ENCODE measurements at regions of chr3 and their contacts with region 1.

Region 1: DNA sequence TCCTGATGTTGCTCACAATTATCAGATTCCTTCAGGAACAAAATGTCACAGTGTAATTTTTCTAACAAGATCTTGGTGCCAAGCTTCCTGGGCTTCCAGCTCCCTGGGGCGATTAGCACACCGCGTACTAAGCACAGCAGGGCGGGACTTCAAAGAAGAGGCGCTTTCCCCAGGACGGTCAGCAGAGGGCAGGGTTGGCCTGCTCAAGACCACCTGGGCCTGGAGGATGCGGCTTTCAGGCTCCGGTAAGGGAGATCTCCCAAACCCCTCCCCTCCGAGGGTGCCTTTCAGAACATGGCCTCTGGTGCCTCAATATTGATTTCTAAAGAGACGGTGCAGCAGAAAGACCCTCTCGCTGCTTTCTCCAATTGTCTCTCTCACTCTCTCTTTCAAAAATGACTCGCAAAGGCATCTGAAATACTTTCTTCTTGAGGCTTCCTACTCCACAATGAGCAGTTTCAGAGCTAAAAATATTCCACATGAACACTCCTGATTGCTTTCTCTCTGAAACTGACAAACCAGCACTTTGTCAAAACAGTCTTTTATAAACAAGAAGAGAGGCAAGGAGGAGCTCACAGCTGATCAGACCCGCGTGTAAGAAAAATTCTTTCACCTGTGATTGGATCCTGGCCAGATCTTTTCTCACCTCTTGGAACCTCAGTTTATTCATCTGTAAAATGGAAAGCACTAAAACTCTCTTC is 154.0 kb downstream of the ADAMTS9 start:
- DNase-seq: peak; percentile 85 to 97 (median 90)
- H3K4me3 ChIP-seq: no peak overlapping the region
- H3K27ac ChIP-seq: peak overlapping the region in 2 of 5 donors; percentile 2 to 3
- H3K4me1 ChIP-seq: peaks cover 0 to 20% of the 10 kb centered on the region in 2 donors
- H3K27me3 ChIP-seq: no peaks in the 10 kb centered on the region
- CTCF ChIP-seq: peak; percentile 48 to 93 (median 84)
- POLR2A ChIP-seq: no peak

Region 2: GRCh38 chr3:64685800-64686445 is 152.2 kb after region 1 on chr3:
- intact Hi-C with region 1: loop called in 1 of 2 experiments (anchors 10 kb)
- DNase-seq: peak; percentile 93 to 97 (median 94)
- H3K4me3 ChIP-seq: peak overlapping the region; percentile 40 to 55 (median 54)
- H3K27ac ChIP-seq: peak overlapping the region; percentile 92 to 97 (median 97)
- H3K4me1 ChIP-seq: peaks cover 0 to 5% of the 10 kb centered on the region in 2 donors
- H3K27me3 ChIP-seq: no peaks in the 10 kb centered on the region
- CTCF ChIP-seq: peak in 4 of 6 experiments; percentile 28 to 34 (median 31)
- POLR2A ChIP-seq: peak; percentile 76 to 90

Region 3: DNA sequence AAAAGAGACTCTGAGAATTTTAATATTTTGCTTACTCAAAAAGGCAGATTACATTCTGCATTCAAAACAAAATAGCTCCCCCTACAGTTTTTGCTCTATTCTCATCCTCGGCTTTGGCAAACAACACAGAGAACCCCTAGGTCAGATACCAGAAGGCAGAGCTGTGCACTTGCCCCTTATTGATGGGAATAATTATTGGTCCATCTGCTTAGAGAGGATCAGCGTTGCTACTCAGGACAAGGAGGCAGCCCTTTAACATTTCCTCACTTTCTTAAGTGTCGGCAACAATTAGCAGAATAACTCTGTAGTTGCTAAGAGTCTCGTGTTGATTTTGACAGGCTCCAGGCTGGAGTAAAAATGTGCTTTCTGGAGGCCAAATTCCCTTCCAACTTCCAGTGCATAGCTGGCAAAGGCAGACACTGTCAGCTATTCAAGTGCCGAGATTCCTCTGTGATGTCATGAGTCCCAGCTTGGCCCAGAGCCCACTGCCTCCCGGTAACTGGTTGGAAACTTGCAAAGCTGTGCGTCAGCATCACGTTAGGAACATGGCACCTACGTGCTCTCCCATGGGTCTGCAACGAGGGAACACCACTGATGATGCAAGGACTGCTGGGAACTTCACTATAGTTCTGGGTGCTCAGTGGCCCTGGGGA is 636.7 kb after region 1 on chr3:
- intact Hi-C with region 1: loop called (anchors 10 kb)
- DNase-seq: peak; percentile 45 to 94 (median 78)
- H3K4me3 ChIP-seq: no peak overlapping the region
- H3K27ac ChIP-seq: peak overlapping the region in 2 of 5 donors; percentile 35 to 75
- H3K4me1 ChIP-seq: no peaks in the 10 kb centered on the region
- H3K27me3 ChIP-seq: no peaks in the 10 kb centered on the region
- CTCF ChIP-seq: peak; percentile 6 to 51 (median 42)
- POLR2A ChIP-seq: no peak

Region 4: DNA sequence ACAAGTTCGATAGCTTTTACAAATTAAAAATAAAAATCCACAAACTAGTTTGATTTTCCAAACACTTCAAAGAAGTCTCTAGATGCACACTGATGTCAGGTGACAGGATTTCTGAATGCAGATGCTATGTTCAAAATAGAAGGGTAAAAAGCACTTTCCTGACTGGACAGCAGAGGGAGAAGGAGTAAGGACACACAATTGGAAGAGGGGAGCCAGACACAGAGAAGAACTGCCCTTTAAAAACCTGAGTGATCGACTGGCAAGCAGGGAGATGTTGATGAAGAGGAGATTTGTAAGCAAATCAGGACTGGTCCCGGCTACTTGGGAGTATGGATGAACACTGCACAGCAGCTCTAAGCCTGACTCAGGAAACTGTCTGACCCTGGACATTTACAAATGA is 892.1 kb after region 1 on chr3:
- intact Hi-C with region 1: loop called in 1 of 2 experiments (anchors 10 kb)
- DNase-seq: no peak
- H3K4me3 ChIP-seq: no peak overlapping the region
- H3K27ac ChIP-seq: no peak overlapping the region
- H3K4me1 ChIP-seq: no peaks in the 10 kb centered on the region
- H3K27me3 ChIP-seq: no peaks in the 10 kb centered on the region
- CTCF ChIP-seq: peak in 5 of 6 experiments; percentile 11 to 36 (median 26)
- POLR2A ChIP-seq: no peak